ENCODE measurements at regions of chr2 and their contacts with region 1.

Region 1: DNA sequence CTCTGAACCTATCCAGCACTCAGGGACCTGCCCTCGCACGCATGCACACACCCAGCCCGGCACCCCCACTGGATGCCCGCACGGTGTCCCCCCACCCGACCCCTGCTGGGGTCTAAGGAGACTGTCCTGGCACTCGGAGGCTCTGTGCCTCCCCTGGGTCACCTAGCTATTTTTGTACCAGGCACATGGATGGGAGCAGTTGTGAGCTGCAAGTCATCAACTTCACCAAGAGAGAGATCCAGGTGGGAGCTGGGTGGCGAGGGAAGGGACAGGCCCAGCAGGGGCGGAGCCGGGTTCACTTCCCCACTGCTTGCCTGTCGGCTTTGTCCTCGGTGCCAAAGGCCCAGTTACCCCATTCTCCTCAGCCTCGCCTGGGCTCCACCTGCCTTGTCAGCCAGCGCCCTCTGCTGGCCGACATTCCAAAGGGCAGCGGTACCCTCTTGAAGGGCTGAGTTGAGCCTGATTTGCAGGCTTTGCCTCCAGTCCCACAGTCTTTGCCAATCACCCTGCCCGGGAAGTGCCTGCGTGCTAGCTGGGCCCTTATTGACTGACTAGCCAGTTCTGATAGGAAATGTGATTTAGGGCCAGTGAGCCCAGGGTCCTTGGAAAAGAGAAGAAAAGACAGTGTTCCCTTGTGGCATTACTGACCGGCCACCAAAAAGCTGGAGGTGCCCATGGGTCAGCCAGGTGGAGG is 5.8 kb downstream of the NT5DC4 start:
- DNase-seq: peak; percentile 91
- H3K4me3 ChIP-seq: no peak overlapping the region
- H3K27ac ChIP-seq: no peak overlapping the region
- H3K4me1 ChIP-seq: peaks cover 0 to 7% (median 0%) of the 10 kb centered on the region in 4 donors
- H3K27me3 ChIP-seq: no peaks in the 10 kb centered on the region
- CTCF ChIP-seq: peak; percentile 79 to 90 (median 90)
- EP300 ChIP-seq: no peak
- POLR2A ChIP-seq: no peak

Region 2: GRCh38 chr2:112601751-112602150 is 124.9 kb before region 1 on chr2:
- intact Hi-C with region 1: loop called (anchors 1 kb)
- DNase-seq: peak; percentile 10
- H3K4me3 ChIP-seq: no peak overlapping the region
- H3K27ac ChIP-seq: no peak overlapping the region
- H3K4me1 ChIP-seq: peaks cover 0 to 11% (median 7%) of the 10 kb centered on the region in 4 donors
- H3K27me3 ChIP-seq: no peaks in the 10 kb centered on the region
- CTCF ChIP-seq: no peak
- EP300 ChIP-seq: no peak
- POLR2A ChIP-seq: no peak

Region 3: GRCh38 chr2:112821142-112821541 is 94.5 kb after region 1 on chr2:
- intact Hi-C with region 1: no loop called
- DNase-seq: no peak
- H3K4me3 ChIP-seq: no peak overlapping the region
- H3K27ac ChIP-seq: no peak overlapping the region
- H3K4me1 ChIP-seq: no peaks in the 10 kb centered on the region
- H3K27me3 ChIP-seq: no peaks in the 10 kb centered on the region
- CTCF ChIP-seq: no peak
- EP300 ChIP-seq: no peak
- POLR2A ChIP-seq: no peak

Measured in sigmoid colon (tissue), 7 donors.